A673 (cell line): ENCODE measurements at regions of chr1 and their contacts with region 1.

Region 1: DNA sequence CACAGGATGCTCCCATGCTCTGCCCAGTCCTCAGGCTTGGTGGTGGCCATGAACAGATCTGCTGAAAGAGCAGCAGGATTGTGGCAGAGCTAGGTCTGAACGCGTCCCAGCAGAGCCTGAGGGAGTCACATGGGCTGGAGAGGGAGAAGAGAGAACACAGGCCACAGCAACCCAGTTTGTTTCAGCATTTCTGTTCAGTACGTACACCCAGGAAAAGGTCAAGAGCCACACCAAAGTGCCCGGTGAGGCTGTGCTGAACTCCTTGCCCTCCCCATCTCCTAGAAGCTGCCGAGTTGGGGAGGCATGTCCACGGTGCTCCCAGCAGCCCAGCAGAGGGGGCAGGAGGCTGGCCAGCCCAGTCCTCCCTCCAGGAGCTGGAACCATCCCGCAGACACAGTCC is 5.5 kb downstream of the PKP1 start:
- DNase-seq: no peak
- H3K4me3 ChIP-seq: peak overlapping the region; percentile 94
- H3K27ac ChIP-seq: peak overlapping the region; percentile 96
- H3K4me1 ChIP-seq: peaks cover 65% of the 10 kb centered on the region
- H3K27me3 ChIP-seq: no peaks in the 10 kb centered on the region
- CTCF ChIP-seq: 0 out of 2 replicates have a peak, but pooled peaks have one; percentile 18

Region 2: DNA sequence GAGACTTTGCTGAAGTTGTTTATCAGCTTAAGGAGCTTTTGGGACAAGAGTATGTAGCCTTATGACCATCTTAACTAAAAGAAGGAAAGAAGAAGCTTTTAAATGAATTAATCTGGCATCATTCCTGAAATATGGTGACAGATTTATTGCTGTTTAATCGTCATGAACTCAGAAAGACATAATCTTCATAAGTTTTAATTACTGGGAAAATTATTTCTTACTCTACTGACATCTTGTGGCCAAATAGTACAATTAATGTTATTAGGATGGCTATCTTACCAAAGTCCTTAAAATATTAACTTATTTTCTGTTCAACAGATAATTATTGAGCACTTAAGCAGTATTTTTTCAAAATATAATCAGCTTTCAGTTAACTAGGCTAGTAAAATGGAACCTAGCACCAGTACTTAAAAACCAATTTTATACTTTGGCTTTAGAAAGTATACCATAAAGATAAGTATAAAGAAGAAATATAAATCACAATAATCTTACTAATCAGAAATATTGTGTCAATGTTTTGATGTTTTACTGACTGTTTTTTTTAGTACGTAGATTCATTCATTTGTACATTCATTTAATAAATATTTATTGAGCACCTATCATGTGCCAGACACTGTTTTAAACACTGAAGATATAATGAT is 450.7 kb before region 1 on chr1:
- CTCF ChIA-PET with region 1: no interaction called
- POLR2A ChIA-PET with region 1: no interaction called
- intact Hi-C with region 1: no loop called
- DNase-seq: peak; percentile 53
- H3K4me3 ChIP-seq: no peak overlapping the region
- H3K27ac ChIP-seq: no peak overlapping the region
- H3K4me1 ChIP-seq: no peaks in the 10 kb centered on the region
- H3K27me3 ChIP-seq: no peaks in the 10 kb centered on the region
- CTCF ChIP-seq: peak; percentile 62

Region 3: DNA sequence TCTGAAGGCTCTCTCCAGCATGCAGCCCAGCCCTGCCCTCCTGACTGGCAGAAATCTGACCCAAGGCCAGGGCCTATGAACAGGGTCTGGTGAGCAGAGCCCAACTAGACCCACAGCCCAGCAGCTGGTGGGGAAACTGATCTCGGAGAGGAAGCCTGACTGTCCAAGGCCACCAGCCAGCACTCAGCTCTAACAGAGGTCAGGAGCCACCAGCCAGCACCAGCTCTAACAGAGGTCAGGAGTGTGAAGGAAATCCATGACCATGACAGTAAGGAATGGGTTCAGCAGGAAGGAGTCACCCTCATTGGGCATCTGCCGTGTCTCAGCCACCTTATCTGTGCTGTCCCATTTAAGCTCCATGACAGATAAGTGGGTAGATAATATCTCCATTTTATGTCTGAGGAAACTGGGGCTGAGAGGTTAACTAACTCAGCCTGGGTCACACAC is 25.7 kb before region 1 on chr1:
- CTCF ChIA-PET with region 1: interaction called, 6 read pairs
- POLR2A ChIA-PET with region 1: interaction called, 10 read pairs
- intact Hi-C with region 1: loop called (anchors 1 kb)
- DNase-seq: no peak
- H3K4me3 ChIP-seq: no peak overlapping the region
- H3K27ac ChIP-seq: peak overlapping the region; percentile 99
- H3K4me1 ChIP-seq: peaks cover 54% of the 10 kb centered on the region
- H3K27me3 ChIP-seq: no peaks in the 10 kb centered on the region
- CTCF ChIP-seq: no peak

Region 4: DNA sequence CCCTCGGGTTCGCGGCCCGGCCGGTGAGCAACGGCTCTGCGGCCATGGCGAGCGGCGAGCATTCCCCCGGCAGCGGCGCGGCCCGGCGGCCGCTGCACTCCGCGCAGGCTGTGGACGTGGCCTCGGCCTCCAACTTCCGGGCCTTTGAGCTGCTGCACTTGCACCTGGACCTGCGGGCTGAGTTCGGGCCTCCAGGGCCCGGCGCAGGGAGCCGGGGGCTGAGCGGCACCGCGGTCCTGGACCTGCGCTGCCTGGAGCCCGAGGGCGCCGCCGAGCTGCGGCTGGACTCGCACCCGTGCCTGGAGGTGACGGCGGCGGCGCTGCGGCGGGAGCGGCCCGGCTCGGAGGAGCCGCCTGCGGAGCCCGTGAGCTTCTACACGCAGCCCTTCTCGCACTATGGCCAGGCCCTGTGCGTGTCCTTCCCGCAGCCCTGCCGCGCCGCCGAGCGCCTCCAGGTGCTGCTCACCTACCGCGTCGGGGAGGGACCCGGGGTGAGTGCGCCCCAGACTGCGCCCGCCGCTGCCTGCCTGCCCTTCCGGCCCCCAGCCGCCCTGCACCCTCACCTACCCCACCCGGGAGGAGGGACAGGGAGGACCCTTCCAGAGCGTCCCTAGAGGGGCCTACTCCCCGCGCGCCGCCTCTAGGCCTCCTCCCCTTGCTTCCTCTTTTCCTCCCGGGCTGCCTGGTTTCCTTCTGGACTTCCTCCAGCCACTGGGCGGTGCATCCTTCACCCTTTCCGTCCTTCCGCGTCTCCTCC is 694.0 kb after region 1 on chr1 and contains the start of gene RNPEP:
- CTCF ChIA-PET with region 1: no interaction called
- POLR2A ChIA-PET with region 1: no interaction called
- intact Hi-C with region 1: no loop called
- DNase-seq: peak; percentile 55
- H3K4me3 ChIP-seq: peak within 1 kb of the TSS; percentile 99
- H3K27ac ChIP-seq: peak within 1 kb of the TSS; percentile 79
- H3K4me1 ChIP-seq: peaks cover 10% of the 10 kb centered on the region
- H3K27me3 ChIP-seq: no peaks in the 10 kb centered on the region
- CTCF ChIP-seq: no peak
- total RNA-seq, gene RNPEP: 59.3 and 74.1 TPM in 2 replicates